Calu3 (cell line): ENCODE measurements at regions of chr5 and their contacts with region 1.

Region 1: DNA sequence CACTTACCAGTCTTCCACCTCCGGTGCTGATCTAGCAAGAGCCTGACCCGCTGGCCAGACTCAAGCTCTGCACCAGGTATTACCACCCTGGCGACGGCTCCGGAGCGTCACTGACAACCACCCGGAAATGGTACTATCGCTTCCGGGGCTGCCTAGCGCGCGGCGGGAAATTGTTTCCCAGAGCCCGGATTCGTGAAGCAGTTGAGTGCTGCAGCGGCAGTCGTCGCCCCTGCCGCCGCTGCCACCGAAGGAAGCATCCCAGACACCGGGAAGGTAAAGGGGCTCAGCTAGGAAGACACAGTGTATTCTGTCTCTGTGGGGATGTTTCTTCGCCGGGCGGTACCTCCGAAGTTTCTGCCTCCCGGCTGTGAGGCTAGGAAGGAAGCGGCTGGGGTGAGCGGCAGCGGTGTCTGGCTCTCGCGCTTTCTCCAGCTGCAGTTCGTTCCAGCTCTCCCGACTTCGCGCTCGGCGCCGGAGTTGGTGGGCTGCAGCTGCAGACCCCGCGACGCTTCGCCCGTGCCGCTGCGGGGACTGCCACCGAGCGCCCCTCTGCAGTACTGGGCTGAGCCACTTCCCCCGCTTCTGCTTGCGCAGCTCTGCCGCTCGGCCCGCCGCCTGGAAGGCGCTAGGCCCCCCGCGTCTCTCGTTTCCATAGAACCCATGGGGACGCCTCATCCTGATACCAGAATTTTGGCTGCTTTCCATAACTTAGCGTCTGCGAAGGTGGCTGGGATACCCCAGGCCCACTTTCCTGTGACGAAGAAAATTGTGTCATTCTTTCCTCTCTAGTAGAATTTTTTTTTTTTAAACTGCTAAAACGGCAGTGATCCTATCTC is at the starts of genes KIAA0825 and SLF1:
- DNase-seq: peak; percentile 92
- H3K4me3 Mint-ChIP-seq: peak within 1 kb of the TSS; percentile 99
- H3K27ac Mint-ChIP-seq: peak within 1 kb of the TSS; percentile 89
- H3K4me1 Mint-ChIP-seq: peaks cover 16% of the 10 kb centered on the region
- H3K27me3 Mint-ChIP-seq: no peaks in the 10 kb centered on the region
- CTCF ChIP-seq: no peak
- total RNA-seq, gene KIAA0825: 1.4 and 1.9 TPM in 2 replicates
- total RNA-seq, gene SLF1: 15.2 and 17.9 TPM in 2 replicates

Region 2: GRCh38 chr5:94254214-94254613 is 364.5 kb before region 1 on chr5:
- CTCF ChIA-PET with region 1: no interaction called
- intact Hi-C with region 1: no loop called
- DNase-seq: no peak
- H3K4me3 Mint-ChIP-seq: no peak overlapping the region
- H3K27ac Mint-ChIP-seq: no peak overlapping the region
- H3K4me1 Mint-ChIP-seq: no peaks in the 10 kb centered on the region
- H3K27me3 Mint-ChIP-seq: no peaks in the 10 kb centered on the region
- CTCF ChIP-seq: no peak

Region 3: DNA sequence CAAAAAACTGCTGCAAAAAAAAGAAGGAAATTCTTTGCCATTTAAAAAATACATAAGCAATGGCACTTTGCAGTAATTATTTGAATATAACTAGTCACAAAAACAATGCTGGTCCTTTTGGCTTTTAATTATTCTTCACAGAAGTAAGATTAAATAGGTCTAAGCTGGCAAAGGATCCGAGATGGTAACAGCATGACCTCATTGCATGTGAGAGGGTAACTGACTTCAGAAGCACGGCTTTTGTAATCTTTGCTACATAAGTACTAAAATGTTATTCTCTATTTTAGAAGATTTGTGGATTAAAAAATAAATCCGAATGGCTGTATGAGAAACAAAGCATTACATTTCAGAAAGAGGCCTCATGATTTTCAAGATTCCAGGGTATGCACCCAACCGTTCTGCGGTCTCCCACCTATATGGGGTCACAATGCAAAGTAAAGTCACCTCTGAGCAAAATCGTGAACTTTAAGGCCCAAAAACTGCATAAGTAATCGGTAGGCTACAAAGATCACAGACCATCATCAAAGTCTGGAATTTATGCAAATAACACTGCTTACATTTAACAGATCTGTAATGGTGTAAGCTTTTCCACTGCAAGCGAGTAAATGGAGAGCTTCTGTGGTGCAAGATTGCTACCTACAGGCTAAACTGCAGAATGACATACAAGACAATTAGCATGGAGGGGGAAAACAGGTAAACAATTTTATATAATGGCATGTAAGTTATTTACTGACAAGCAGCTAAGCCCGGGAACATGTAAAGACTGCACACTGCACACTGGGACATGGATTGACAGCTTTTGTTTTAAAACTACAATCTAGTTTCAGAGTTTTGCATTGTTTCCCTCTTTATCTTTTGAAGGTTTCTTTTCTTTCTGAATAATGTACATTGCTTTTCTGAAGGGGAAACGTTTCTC is 231.4 kb after region 1 on chr5:
- CTCF ChIA-PET with region 1: no interaction called
- intact Hi-C with region 1: loop called (anchors 10 kb)
- DNase-seq: peak; percentile 19
- H3K4me3 Mint-ChIP-seq: no peak overlapping the region
- H3K27ac Mint-ChIP-seq: no peak overlapping the region
- H3K4me1 Mint-ChIP-seq: no peaks in the 10 kb centered on the region
- H3K27me3 Mint-ChIP-seq: no peaks in the 10 kb centered on the region
- CTCF ChIP-seq: peak; percentile 62

Region 4: GRCh38 chr5:95709967-95710685 is 1091.4 kb after region 1 on chr5:
- CTCF ChIA-PET with region 1: no interaction called
- intact Hi-C with region 1: no loop called
- DNase-seq: peak; percentile 54
- H3K4me3 Mint-ChIP-seq: peak overlapping the region; percentile 42
- H3K27ac Mint-ChIP-seq: no peak overlapping the region
- H3K4me1 Mint-ChIP-seq: peaks cover 29% of the 10 kb centered on the region
- H3K27me3 Mint-ChIP-seq: no peaks in the 10 kb centered on the region
- CTCF ChIP-seq: no peak